ENCODE measurements at regions of chr7 and their contacts with region 1.

Region 1: GRCh38 chr7:17234398-17235031 is 63.9 kb upstream of the AHR start:
- DNase-seq: peak; percentile 76
- ATAC-seq: peak; percentile 88
- H3K4me3 Mint-ChIP-seq: peak overlapping the region; percentile 65
- H3K27ac Mint-ChIP-seq: peak overlapping the region; percentile 94
- H3K4me1 Mint-ChIP-seq: peaks cover 44% of the 10 kb centered on the region
- H3K27me3 Mint-ChIP-seq: no peaks in the 10 kb centered on the region

Region 2: GRCh38 chr7:17063045-17063383 is 171.5 kb before region 1 on chr7:
- CTCF ChIA-PET with region 1: no interaction called
- POLR2A ChIA-PET with region 1: no interaction called
- intact Hi-C with region 1: no loop called
- DNase-seq: no peak
- ATAC-seq: no peak
- H3K4me3 Mint-ChIP-seq: no peak overlapping the region
- H3K27ac Mint-ChIP-seq: no peak overlapping the region
- H3K4me1 Mint-ChIP-seq: peaks cover 15% of the 10 kb centered on the region
- H3K27me3 Mint-ChIP-seq: no peaks in the 10 kb centered on the region

Region 3: GRCh38 chr7:17139081-17139480 is 95.4 kb before region 1 on chr7:
- CTCF ChIA-PET with region 1: no interaction called
- POLR2A ChIA-PET with region 1: no interaction called
- intact Hi-C with region 1: loop called (anchors 1 kb)
- DNase-seq: no peak
- ATAC-seq: peak; percentile 83
- H3K4me3 Mint-ChIP-seq: no peak overlapping the region
- H3K27ac Mint-ChIP-seq: peak overlapping the region; percentile 91
- H3K4me1 Mint-ChIP-seq: peaks cover 74% of the 10 kb centered on the region
- H3K27me3 Mint-ChIP-seq: no peaks in the 10 kb centered on the region

Region 4: DNA sequence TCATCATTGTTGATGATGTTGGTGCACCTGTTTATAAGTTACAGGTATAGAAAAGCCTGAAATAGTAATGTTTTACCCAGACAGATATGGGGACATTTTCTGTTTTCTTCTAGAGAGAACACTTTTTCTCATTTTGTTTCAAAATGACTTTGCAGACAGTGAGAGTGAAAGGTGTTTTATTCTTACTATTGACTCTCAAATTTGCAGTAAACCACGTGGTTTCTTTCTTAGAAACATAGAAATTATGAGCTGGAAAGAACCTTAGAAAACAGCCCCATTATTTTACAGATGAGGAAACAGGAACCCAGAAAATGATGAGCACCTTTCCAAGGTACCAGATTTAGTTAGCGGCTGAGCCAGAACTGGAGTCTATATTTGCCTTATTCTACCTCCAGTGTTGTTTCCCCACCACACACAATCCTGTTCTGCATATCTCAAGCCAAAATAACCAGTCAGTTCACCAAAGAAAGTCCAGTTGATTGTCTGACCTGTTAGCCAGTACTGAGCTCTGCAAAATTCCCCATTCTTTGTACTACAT is 74.9 kb before region 1 on chr7:
- CTCF ChIA-PET with region 1: no interaction called
- POLR2A ChIA-PET with region 1: no interaction called
- intact Hi-C with region 1: loop called (anchors 1 kb)
- DNase-seq: peak; percentile 24
- ATAC-seq: peak; percentile 90
- H3K4me3 Mint-ChIP-seq: peak overlapping the region; percentile 0
- H3K27ac Mint-ChIP-seq: peak overlapping the region; percentile 55
- H3K4me1 Mint-ChIP-seq: peaks cover 40% of the 10 kb centered on the region
- H3K27me3 Mint-ChIP-seq: peaks cover 4% of the 10 kb centered on the region

Region 5: GRCh38 chr7:17255926-17256325 is 21.4 kb after region 1 on chr7:
- CTCF ChIA-PET with region 1: no interaction called
- POLR2A ChIA-PET with region 1: no interaction called
- intact Hi-C with region 1: loop called (anchors 1 kb)
- DNase-seq: no peak
- ATAC-seq: no peak
- H3K4me3 Mint-ChIP-seq: no peak overlapping the region
- H3K27ac Mint-ChIP-seq: no peak overlapping the region
- H3K4me1 Mint-ChIP-seq: peaks cover 18% of the 10 kb centered on the region
- H3K27me3 Mint-ChIP-seq: no peaks in the 10 kb centered on the region

Region 6: DNA sequence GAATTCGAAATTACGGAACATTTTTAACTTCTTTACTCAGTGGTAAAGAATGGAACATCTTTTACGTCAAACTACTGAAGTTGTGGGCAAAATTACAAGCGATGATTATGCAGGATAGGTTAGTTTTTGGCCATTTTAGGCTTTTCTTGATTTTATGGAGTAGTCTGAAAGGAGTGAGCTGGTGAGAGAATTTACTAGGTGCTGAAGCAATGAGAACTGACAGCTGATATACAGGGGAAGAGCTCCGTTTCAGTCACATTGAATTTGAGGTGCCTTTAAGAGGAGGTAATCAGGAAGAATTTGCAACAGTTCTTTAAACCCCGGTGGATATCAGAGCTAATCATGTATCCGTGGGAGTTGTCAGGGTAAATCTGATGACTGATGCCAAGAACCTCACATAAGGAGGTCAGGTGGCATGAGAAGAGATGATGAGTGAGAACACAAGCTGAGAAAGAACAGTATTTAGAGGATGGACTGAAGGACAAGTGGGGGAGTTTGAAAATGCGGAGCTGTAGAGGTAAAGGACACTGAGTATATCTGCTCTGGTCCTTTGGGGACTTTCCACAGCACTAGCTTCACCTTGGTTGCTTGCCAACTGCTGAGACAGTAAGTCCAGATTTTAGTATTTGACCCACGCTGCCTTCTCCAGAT is 168.2 kb after region 1 on chr7:
- CTCF ChIA-PET with region 1: no interaction called
- POLR2A ChIA-PET with region 1: no interaction called
- intact Hi-C with region 1: loop called in 1 of 2 experiments (anchors 1 kb)
- DNase-seq: peak; percentile 21
- ATAC-seq: peak; percentile 69
- H3K4me3 Mint-ChIP-seq: peak overlapping the region; percentile 17
- H3K27ac Mint-ChIP-seq: peak overlapping the region; percentile 83
- H3K4me1 Mint-ChIP-seq: peaks cover 28% of the 10 kb centered on the region
- H3K27me3 Mint-ChIP-seq: peaks cover 3% of the 10 kb centered on the region

Measured in activated CD4-positive, alpha-beta T cell treated with anti-CD3 and anti-CD28 coated beads for 36 hours (primary cell).